WTC11 (cell line): ENCODE measurements at regions of chr17 and their contacts with region 1.

Region 1: GRCh38 chr17:75173526-75173925 is 9.2 kb downstream of the SUMO2 start:
- DNase-seq: no peak
- ATAC-seq: no peak
- H3K4me3 Mint-ChIP-seq: no peak overlapping the region
- H3K27ac Mint-ChIP-seq: peak overlapping the region; percentile 55
- H3K4me1 Mint-ChIP-seq: no peaks in the 10 kb centered on the region
- H3K27me3 Mint-ChIP-seq: no peaks in the 10 kb centered on the region
- CTCF ChIP-seq: no peak

Region 2: GRCh38 chr17:75131280-75132017 is 42.1 kb before region 1 on chr17 and contains the start of gene NT5C:
- CTCF ChIA-PET with region 1: interaction called, 15 read pairs
- POLR2A ChIA-PET with region 1: interaction called, 3 read pairs
- DNase-seq: peak; percentile 87
- ATAC-seq: peak; percentile 75
- H3K4me3 Mint-ChIP-seq: peak within 1 kb of the TSS; percentile 84
- H3K27ac Mint-ChIP-seq: peak within 1 kb of the TSS; percentile 93
- H3K4me1 Mint-ChIP-seq: peaks cover 20% of the 10 kb centered on the region
- H3K27me3 Mint-ChIP-seq: no peaks in the 10 kb centered on the region
- CTCF ChIP-seq: peak; percentile 59
- total RNA-seq, gene NT5C: 91.0 to 102 TPM (median 96.9 TPM) in 3 replicates

Region 3: GRCh38 chr17:75144816-75145512 is 28.6 kb before region 1 on chr17:
- CTCF ChIA-PET with region 1: interaction called, 11 read pairs
- POLR2A ChIA-PET with region 1: no interaction called
- DNase-seq: no peak
- ATAC-seq: no peak
- H3K4me3 Mint-ChIP-seq: no peak overlapping the region
- H3K27ac Mint-ChIP-seq: peak overlapping the region; percentile 60; the same call in 1 of the 2 replicates
- H3K4me1 Mint-ChIP-seq: peaks cover 4% of the 10 kb centered on the region
- H3K27me3 Mint-ChIP-seq: no peaks in the 10 kb centered on the region
- CTCF ChIP-seq: no peak

Region 4: DNA sequence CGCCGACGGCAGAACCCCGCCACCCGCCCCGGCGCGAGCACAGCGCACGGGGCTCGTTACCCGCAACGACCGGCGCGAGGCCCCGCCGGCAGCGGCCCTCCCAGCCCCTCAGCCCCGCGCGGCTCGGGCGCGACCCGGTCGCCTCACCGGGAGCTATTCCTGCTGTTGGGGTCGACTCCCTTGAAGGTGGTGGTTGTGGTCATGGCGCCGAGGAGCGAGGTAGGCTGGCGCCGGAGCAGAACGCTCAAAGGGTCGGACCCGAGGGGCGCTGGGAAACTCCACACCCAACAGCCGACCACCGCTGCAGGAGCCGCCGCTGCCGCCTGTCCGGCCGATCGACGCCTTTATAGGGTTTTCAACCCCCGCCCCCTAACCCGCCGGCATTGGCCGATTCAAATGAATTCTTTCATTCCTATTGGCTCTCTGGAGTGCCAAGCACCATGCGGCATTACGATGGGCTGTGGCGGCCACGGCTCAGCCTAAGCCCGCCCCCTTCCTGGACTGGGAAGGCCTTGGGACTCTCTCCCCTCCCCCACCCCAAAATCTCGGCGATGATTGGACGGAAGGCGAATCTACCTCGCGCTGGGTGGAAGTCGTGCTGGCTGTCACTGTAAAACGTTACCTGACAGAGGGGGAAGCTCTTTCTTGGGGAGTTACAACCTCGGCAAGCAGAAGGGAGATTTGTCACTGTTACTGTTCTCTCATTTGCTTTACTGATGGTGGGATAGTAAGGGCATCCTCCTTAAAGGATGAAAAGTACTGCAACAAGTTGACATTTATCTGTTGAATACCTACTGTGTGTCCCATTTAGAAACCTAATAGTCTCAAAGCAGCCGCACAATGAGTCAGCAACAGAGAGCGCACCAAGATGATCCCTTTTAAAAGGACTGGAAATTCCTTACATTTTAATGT is 19.1 kb before region 1 on chr17 and contains the start of gene JPT1:
- CTCF ChIA-PET with region 1: interaction called, 18 read pairs
- POLR2A ChIA-PET with region 1: interaction called, 9 read pairs
- DNase-seq: peak; percentile 99
- ATAC-seq: peak; percentile 96
- H3K4me3 Mint-ChIP-seq: peak within 1 kb of the TSS; percentile 97
- H3K27ac Mint-ChIP-seq: peak within 1 kb of the TSS; percentile 94
- H3K4me1 Mint-ChIP-seq: peaks cover 47% of the 10 kb centered on the region
- H3K27me3 Mint-ChIP-seq: peaks cover 3% of the 10 kb centered on the region; the same call in 1 of the 2 replicates
- CTCF ChIP-seq: no peak
- total RNA-seq, gene JPT1: 289 to 341 TPM (median 300 TPM) in 3 replicates

Region 5: GRCh38 chr17:75199886-75200618 is 26.5 kb after region 1 on chr17:
- CTCF ChIA-PET with region 1: interaction called, 19 read pairs
- POLR2A ChIA-PET with region 1: interaction called, 6 read pairs
- DNase-seq: no peak
- ATAC-seq: no peak
- H3K4me3 Mint-ChIP-seq: no peak overlapping the region
- H3K27ac Mint-ChIP-seq: no peak overlapping the region
- H3K4me1 Mint-ChIP-seq: 0 out of 2 replicates have a peak, but pooled peaks cover 2% of the 10 kb centered on the region
- H3K27me3 Mint-ChIP-seq: peaks cover 2% of the 10 kb centered on the region; the same call in 1 of the 2 replicates
- CTCF ChIP-seq: no peak

Region 6: DNA sequence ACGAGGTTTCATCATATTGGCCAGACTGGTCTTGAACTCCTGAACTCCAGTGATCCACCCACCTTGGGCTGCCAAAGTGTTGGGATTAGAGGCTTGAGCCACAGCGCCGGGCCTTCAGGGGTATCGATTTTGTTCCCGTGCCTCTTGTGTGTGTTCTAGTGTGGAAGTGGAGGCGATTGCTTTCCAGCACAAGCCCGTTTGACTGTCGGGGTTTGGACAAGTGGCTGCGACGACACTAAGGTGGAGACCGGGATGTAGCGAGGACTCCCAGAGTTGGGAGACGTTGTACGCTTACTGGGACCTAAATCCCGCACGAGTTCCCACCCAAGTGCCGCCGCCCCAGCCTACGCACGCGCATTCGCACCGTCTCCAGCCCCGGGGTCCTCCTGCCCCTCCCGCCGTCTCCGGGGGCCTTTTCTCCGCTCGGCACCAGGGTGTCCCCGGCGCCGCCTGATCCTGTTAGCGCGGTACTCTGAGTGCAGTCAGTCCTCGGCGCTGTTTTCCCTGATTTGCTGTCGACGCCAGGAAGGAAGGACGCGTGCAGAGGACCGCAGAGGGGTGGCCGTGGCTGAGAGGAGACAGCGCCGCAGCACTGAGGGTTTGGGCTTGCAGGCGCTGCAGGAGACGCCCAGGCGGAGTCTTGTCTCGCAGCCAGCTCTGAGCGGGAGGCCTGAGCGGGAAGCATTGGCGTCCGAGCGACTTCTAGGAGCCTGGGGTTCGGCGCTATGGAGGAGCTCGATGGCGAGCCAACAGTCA is 31.7 kb after region 1 on chr17 and contains the start of gene NUP85:
- CTCF ChIA-PET with region 1: interaction called, 19 read pairs
- POLR2A ChIA-PET with region 1: interaction called, 6 read pairs
- DNase-seq: peak; percentile 95
- ATAC-seq: peak; percentile 89
- H3K4me3 Mint-ChIP-seq: peak within 1 kb of the TSS; percentile 92
- H3K27ac Mint-ChIP-seq: peak within 1 kb of the TSS; percentile 100
- H3K4me1 Mint-ChIP-seq: peaks cover 14% of the 10 kb centered on the region
- H3K27me3 Mint-ChIP-seq: no peaks in the 10 kb centered on the region
- CTCF ChIP-seq: no peak
- total RNA-seq, gene NUP85: 89.7 to 109 TPM (median 95.1 TPM) in 3 replicates